PC-3 (cell line): ENCODE measurements at regions of chr14 and their contacts with region 1.

Region 1: DNA sequence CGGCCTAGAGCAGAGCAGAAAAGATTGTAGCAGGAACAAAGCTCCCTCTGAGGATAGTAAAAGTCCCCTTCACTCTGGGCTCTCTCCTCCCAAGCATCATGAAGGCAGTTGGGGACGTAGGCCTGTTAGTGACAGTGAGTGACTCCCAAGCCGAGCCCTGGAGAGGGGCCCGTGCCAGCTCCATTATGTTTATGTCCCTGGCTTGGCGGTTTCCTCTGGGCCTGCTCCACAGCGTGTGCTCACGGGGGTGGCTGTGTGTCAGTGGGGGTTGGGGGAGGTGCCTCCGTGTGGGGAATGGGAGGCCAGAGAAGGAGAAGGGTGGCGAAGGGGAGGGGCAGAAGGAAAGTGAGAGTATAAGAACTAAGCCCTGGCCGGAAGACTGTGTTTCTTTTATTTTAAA is 170.0 kb upstream of the VASH1 start:
- DNase-seq: no peak
- ATAC-seq: no peak
- H3K4me3 ChIP-seq: no peak overlapping the region
- H3K27ac ChIP-seq: no peak overlapping the region
- H3K4me1 ChIP-seq: no peaks in the 10 kb centered on the region
- H3K27me3 ChIP-seq: peaks cover 51% of the 10 kb centered on the region
- CTCF ChIP-seq: no peak

Region 2: DNA sequence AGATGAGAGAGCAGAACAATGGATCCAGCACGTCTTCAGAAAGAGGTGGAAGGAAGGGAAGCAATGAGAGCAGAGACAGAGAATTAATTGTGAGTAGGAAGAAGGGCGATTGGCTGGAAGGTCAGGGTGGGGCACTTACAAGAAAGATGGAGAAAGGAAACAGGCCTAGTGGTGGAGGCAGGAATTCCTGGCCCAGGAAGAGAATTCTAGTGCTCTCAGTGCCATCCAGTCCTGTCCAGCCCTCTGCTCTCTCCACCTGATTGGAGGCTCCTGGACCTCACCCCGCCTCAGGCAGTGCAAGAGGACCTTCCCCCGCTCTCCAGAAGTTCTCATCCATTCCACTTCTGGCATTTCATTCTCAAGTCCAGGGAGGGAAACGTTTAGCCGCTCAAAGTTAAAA is 636.8 kb after region 1 on chr14:
- CTCF ChIA-PET with region 1: no interaction called
- POLR2A ChIA-PET with region 1: interaction called, 12 read pairs
- intact Hi-C with region 1: no loop called
- DNase-seq: no peak
- ATAC-seq: no peak
- H3K4me3 ChIP-seq: no peak overlapping the region
- H3K27ac ChIP-seq: no peak overlapping the region
- H3K4me1 ChIP-seq: no peaks in the 10 kb centered on the region
- H3K27me3 ChIP-seq: no peaks in the 10 kb centered on the region
- CTCF ChIP-seq: no peak